K562 (cell line): ENCODE measurements at regions of chr5 and their contacts with region 1.

Region 1: DNA sequence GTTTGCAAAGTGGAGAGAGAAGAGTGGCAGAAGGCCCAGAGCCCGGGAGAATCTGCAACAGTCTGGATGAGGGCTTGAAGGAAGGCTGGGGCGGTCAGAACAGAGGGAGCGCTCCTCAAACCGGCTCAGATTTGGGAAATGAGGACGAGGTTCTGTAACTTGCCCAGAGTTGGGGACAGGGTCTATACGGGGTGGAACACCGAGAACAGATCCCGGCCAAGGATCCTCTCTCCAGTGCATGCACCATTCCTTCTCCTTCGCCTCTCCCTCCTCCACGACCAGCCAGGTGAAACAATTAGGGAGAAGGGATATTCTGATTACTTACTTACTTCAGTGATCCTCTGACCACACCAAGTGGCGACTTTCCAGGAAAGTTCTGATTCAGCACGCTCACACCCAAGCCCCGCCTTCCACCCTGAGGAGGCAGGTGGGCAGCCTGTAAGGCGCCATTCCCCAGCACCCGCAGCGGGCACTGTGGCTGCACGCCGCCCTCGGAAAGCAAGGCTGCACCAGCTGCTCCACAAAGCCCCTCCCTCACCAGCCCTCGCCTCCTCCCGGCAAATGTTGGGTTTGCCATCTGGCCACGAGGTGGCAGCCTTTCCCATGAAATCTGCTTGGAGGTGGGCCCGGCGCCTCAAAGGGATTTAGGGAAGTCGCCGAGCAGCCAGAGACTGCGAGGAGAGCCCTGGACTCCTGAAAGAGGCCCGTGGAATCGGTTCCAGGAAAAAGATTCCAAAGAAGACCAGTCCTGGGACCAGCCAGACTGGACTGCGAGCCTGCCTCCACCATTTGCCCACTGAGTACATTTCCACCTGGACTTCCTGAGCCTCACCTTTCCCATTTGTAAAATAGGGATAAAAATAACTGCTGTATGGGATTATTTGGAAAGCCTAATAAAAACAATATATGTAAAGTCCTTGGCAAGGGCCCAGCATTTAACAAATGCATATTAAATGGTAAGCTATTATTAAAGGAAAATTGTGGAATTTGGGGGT is 22.2 kb upstream of the WWC1 start:
- DNase-seq: peak; percentile 78 to 85 (median 80)
- ATAC-seq: peak; percentile 99
- H3K4me3 ChIP-seq: no peak overlapping the region
- H3K27ac ChIP-seq: no peak overlapping the region
- H3K4me1 ChIP-seq: peaks cover 0 to 5% of the 10 kb centered on the region in 2 experiments; a peak in 2 of 5 replicates
- H3K27me3 ChIP-seq: peaks cover 2 to 18% of the 10 kb centered on the region in 2 experiments; a peak in 3 of 5 replicates
- CTCF ChIP-seq: peak; percentile 83 to 87 (median 86)
- EP300 ChIP-seq: no peak
- POLR2A ChIP-seq: no peak
- RAD21 ChIP-seq: peak; percentile 84 to 89

Region 2: DNA sequence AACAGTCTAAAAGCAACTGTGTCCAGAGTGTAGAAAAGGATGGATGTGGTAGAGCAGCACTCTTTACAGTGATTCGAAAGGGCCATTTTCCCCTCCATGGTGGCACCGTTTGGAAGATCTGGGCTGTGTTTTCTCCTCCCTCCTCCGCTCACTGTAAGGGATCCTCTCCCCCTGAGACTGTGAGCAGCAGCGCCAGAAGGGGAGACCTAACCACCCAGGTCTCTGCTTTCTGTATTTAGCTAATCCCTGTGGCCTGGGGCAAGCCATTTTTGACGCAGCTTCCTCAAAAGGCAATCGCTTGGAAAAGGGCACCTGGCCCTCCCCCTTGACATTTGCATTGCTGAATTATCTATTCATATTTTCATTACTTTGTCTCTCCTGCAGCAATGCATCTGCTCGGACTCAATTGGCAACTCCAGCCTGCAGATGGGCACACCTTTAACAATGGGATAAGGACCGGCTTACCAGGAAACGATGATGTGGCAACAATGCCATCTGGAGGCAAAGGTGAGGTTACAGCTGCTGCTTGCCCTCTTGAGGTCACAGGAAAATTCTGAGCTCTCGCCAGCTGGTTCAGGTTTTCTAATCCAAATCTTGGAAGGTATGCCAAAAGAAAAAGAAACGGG is 222.1 kb before region 1 on chr5:
- CTCF ChIA-PET with region 1: no interaction called
- POLR2A ChIA-PET with region 1: no interaction called
- in situ Hi-C with region 1: no loop called
- intact Hi-C with region 1: no loop called
- DNase-seq: peak in 2 of 4 experiments; percentile 8 to 17
- ATAC-seq: no peak
- H3K4me3 ChIP-seq: no peak overlapping the region
- H3K27ac ChIP-seq: no peak overlapping the region
- H3K4me1 ChIP-seq: no peaks in the 10 kb centered on the region
- H3K27me3 ChIP-seq: no peaks in the 10 kb centered on the region
- CTCF ChIP-seq: peak; percentile 21 to 41 (median 30); a peak in 3 of 6 replicates
- EP300 ChIP-seq: no peak
- POLR2A ChIP-seq: no peak
- RAD21 ChIP-seq: peak in 1 of 2 experiments; percentile 36; a peak in 2 of 4 replicates

Region 3: DNA sequence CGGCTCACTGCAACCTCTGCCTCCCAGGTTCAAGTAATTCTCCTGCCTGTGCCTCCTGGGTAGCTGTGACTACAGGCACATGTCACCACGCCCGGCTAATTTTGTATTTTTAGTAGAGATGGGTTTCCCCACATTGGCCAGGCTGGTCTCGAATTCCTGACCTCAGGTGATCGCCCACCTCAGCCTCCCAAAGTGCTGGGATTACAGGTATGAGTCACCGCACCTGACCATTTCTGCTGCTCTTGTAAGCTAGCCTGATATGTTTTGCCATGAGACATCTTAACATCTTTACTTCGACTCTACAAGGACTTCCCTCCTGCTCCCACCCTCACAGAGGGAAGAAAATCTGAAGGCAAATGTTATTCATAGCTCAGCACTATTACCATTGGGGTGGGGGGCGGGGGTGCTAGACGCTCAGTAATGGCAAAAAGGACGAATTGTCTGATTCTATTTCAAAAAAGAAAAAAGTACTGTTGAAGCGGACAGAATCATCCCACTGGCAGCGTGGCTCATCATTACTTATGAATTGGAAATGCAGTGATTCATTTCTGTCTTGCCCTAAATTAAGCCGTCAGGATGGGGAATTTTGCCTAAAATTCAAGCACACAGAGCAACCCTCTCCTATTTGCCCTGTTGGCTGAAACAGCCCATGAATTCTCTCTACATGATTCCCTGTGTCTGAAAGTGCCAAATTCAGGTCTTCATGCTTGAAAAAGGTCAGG is 24.2 kb before region 1 on chr5:
- CTCF ChIA-PET with region 1: no interaction called
- POLR2A ChIA-PET with region 1: no interaction called
- in situ Hi-C with region 1: no loop called
- intact Hi-C with region 1: no loop called
- DNase-seq: no peak
- ATAC-seq: no peak
- H3K4me3 ChIP-seq: no peak overlapping the region
- H3K27ac ChIP-seq: no peak overlapping the region
- H3K4me1 ChIP-seq: no peaks in the 10 kb centered on the region
- H3K27me3 ChIP-seq: peaks cover 0 to 24% of the 10 kb centered on the region in 2 experiments; a peak in 2 of 5 replicates
- CTCF ChIP-seq: no peak
- EP300 ChIP-seq: no peak
- POLR2A ChIP-seq: no peak
- RAD21 ChIP-seq: no peak

Region 4: DNA sequence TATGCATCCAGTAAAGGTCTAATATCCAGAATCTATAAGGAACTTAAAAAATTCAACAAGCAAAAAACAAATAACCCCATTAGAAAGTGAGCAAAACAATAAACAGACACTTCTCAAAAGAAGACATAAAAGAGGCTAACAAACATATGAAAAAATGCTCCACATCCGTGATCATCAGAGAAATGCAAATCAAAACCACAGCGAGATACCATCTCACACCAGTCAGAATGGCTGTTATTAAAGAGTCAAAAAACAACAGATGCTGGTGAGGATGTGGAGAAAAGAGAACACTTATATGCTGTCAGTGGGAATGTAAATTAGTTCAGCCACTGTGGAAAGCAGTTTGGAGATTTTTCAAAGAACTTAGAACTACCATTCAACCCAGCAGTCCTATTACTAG is 108.3 kb after region 1 on chr5:
- CTCF ChIA-PET with region 1: interaction called, 11 read pairs
- POLR2A ChIA-PET with region 1: no interaction called
- in situ Hi-C with region 1: no loop called
- intact Hi-C with region 1: no loop called
- DNase-seq: no peak
- ATAC-seq: no peak
- H3K4me3 ChIP-seq: no peak overlapping the region
- H3K27ac ChIP-seq: no peak overlapping the region
- H3K4me1 ChIP-seq: no peaks in the 10 kb centered on the region
- H3K27me3 ChIP-seq: peaks cover 3 to 5% of the 10 kb centered on the region in 2 experiments; a peak in 2 of 5 replicates
- CTCF ChIP-seq: no peak
- EP300 ChIP-seq: no peak
- POLR2A ChIP-seq: no peak
- RAD21 ChIP-seq: no peak

Region 5: GRCh38 chr5:168422431-168422830 is 153.2 kb after region 1 on chr5:
- CTCF ChIA-PET with region 1: no interaction called
- POLR2A ChIA-PET with region 1: no interaction called
- in situ Hi-C with region 1: no loop called
- intact Hi-C with region 1: loop called (anchors 10 kb)
- DNase-seq: no peak
- ATAC-seq: peak; percentile 78
- H3K4me3 ChIP-seq: no peak overlapping the region
- H3K27ac ChIP-seq: no peak overlapping the region
- H3K4me1 ChIP-seq: no peaks in the 10 kb centered on the region
- H3K27me3 ChIP-seq: peaks cover 3 to 48% of the 10 kb centered on the region in 2 experiments; a peak in 2 of 5 replicates
- CTCF ChIP-seq: peak in 1 of 3 experiments; percentile 29; a peak in 1 of 6 replicates
- EP300 ChIP-seq: no peak
- POLR2A ChIP-seq: no peak
- RAD21 ChIP-seq: no peak

Region 6: DNA sequence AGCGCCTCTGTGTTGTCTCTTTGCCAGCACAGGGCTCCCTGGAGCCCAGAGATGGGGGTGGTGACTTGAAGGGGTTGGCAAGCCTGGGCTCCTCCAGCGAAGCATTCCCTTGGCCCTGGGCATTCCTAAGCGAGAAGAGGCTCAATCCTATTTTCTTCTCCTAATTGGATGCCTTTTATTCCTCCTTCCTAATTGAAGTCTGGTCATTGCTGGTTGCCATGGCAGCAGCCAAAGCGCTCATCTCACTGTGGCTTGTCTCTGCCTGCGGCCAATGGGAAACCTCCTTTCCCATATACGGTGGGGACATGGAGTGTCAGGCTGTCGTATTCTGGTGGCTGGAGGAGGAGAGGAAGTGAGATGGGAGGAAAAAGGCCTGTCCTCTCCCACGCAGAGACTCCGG is 164.8 kb after region 1 on chr5:
- CTCF ChIA-PET with region 1: no interaction called
- POLR2A ChIA-PET with region 1: interaction called, 3 read pairs
- in situ Hi-C with region 1: loop called (anchors 10 kb)
- intact Hi-C with region 1: loop called (anchors 10 kb)
- DNase-seq: no peak
- ATAC-seq: no peak
- H3K4me3 ChIP-seq: no peak overlapping the region
- H3K27ac ChIP-seq: no peak overlapping the region
- H3K4me1 ChIP-seq: no peaks in the 10 kb centered on the region
- H3K27me3 ChIP-seq: peaks cover 0 to 19% of the 10 kb centered on the region in 2 experiments; a peak in 2 of 5 replicates
- CTCF ChIP-seq: no peak
- EP300 ChIP-seq: no peak
- POLR2A ChIP-seq: no peak
- RAD21 ChIP-seq: no peak

Region 7: DNA sequence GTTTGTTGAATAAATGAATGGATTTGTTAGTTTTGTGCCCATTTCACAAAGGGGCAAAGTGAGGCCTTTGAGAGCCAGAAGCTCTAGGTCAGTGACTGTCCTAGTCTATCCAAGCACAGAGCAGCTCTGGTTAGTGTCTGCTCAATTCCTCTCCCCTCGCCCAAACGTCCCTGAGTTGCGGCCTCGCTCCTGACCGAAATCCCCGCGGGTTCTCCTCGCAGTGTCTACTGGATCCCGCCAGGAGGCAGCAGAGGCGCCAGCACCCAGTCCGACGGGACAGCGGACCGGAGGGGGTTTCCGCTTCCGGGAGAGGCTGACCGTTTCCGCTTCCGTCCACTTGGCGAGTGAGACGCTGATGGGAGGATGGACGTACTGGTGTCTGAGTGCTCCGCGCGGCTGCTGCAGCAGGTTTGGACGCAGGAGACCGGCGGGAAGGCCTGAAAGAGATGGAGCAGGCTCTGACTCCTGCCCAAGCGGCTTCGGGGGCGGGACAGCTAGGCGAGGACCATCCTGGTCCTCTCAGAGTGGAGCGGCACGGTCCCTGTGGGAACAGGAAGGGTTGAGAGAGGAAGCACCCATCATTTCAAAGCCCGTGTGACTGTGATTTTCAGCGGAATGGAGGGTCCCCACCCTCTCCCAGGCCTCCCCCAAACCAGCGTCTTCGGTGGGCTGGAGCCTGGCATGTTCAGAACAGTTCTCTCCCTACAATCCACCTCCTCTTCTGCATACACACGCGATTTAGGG is 217.1 kb after region 1 on chr5 and contains the start of gene RARS1:
- CTCF ChIA-PET with region 1: no interaction called
- POLR2A ChIA-PET with region 1: no interaction called
- in situ Hi-C with region 1: no loop called
- intact Hi-C with region 1: loop called (anchors 5 kb)
- DNase-seq: peak; percentile 94 to 95 (median 94)
- ATAC-seq: peak; percentile 98
- H3K4me3 ChIP-seq: peak within 1 kb of the TSS; percentile 99
- H3K27ac ChIP-seq: peak within 1 kb of the TSS; percentile 74; the same call in 2 of the 3 replicates
- H3K4me1 ChIP-seq: peaks cover 0 to 2% of the 10 kb centered on the region in 2 experiments; a peak in 2 of 5 replicates
- H3K27me3 ChIP-seq: no peaks in the 10 kb centered on the region
- CTCF ChIP-seq: peak; percentile 94 to 97 (median 96)
- EP300 ChIP-seq: no peak
- POLR2A ChIP-seq: peak; percentile 98
- RAD21 ChIP-seq: peak; percentile 43 to 67; a peak in 3 of 4 replicates
- polyA plus RNA-seq, gene RARS1: 139 to 196 TPM

Region 8: DNA sequence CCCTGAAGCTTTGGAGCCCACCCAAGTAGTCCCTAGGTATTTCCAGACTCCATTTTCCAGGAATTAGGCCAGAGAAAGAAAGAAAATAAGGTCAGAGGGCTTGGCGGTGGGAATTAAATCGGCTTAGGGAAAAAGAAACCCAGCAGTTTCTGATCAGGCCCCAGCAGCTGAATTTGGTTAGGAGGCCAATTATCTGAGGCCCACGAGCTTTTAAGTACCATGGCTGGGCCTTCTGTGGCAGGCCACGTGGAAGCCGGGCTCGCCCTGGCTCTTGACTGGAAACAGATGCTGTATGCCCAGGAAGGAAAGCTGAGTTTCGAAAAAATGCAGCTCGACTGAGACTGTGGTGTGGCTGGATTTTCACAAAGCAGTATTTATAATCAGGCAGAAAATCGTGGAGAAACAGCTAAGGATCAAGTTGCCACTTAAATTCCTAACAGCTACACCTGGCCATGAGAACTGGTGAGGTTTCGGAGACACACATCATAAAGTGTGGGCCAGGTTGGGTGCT is 385.0 kb after region 1 on chr5:
- CTCF ChIA-PET with region 1: no interaction called
- POLR2A ChIA-PET with region 1: no interaction called
- in situ Hi-C with region 1: loop called (anchors 25 kb)
- intact Hi-C with region 1: no loop called
- DNase-seq: no peak
- ATAC-seq: no peak
- H3K4me3 ChIP-seq: no peak overlapping the region
- H3K27ac ChIP-seq: no peak overlapping the region
- H3K4me1 ChIP-seq: peaks cover 0 to 23% of the 10 kb centered on the region in 2 experiments; a peak in 2 of 5 replicates
- H3K27me3 ChIP-seq: no peaks in the 10 kb centered on the region
- CTCF ChIP-seq: no peak
- EP300 ChIP-seq: no peak
- POLR2A ChIP-seq: no peak
- RAD21 ChIP-seq: no peak

Region 9: GRCh38 chr5:168679515-168679920 is 410.3 kb after region 1 on chr5:
- CTCF ChIA-PET with region 1: no interaction called
- POLR2A ChIA-PET with region 1: no interaction called
- in situ Hi-C with region 1: loop called (anchors 25 kb)
- intact Hi-C with region 1: loop called (anchors 2 kb)
- DNase-seq: peak; percentile 71 to 79 (median 76)
- ATAC-seq: peak; percentile 91
- H3K4me3 ChIP-seq: no peak overlapping the region
- H3K27ac ChIP-seq: no peak overlapping the region
- H3K4me1 ChIP-seq: no peaks in the 10 kb centered on the region; a peak in 1 of 5 replicates
- H3K27me3 ChIP-seq: peaks cover 0 to 5% of the 10 kb centered on the region in 2 experiments; a peak in 1 of 5 replicates
- CTCF ChIP-seq: peak; percentile 81 to 85 (median 85)
- EP300 ChIP-seq: no peak
- POLR2A ChIP-seq: no peak
- RAD21 ChIP-seq: peak; percentile 76 to 84